ENCODE measurements at regions of chr16 and their contacts with region 1.

Region 1: GRCh38 chr16:67246934-67247697 is at the start of gene FHOD1:
- DNase-seq: peak; percentile 93 to 95 (median 93)
- H3K4me3 ChIP-seq: peak within 1 kb of the TSS; percentile 71 to 97 (median 74)
- H3K4me3 Mint-ChIP-seq: peak within 1 kb of the TSS; percentile 92
- H3K27ac ChIP-seq: peak within 1 kb of the TSS; percentile 84 to 100
- H3K27ac Mint-ChIP-seq: peak within 1 kb of the TSS; percentile 82 to 100 (median 99)
- H3K4me1 ChIP-seq: peaks cover 57 to 64% of the 10 kb centered on the region in 2 donors
- H3K4me1 Mint-ChIP-seq: peaks cover 59% of the 10 kb centered on the region
- H3K27me3 ChIP-seq: peaks cover 24 to 32% of the 10 kb centered on the region in 2 donors
- H3K27me3 Mint-ChIP-seq: peaks cover 22 to 41% (median 30%) of the 10 kb centered on the region in 3 donors
- CTCF ChIP-seq: no peak
- polyA plus RNA-seq, gene FHOD1: 5.1 to 152 (median 5.5) TPM

Region 2: GRCh38 chr16:66696669-66697630 is 550.2 kb before region 1 on chr16 and contains the start of gene CMTM4:
- intact Hi-C with region 1: loop called in 1 of 2 experiments (anchors 10 kb)
- DNase-seq: peak; percentile 67 to 82 (median 70)
- H3K4me3 ChIP-seq: peak within 1 kb of the TSS; percentile 66 to 92 (median 86)
- H3K4me3 Mint-ChIP-seq: peak within 1 kb of the TSS; percentile 91 to 93
- H3K27ac ChIP-seq: peak within 1 kb of the TSS; percentile 21 to 58
- H3K27ac Mint-ChIP-seq: peak within 1 kb of the TSS; percentile 59 to 88 (median 80)
- H3K4me1 ChIP-seq: peaks cover 74 to 81% of the 10 kb centered on the region in 2 donors
- H3K4me1 Mint-ChIP-seq: peaks cover 74% of the 10 kb centered on the region
- H3K27me3 ChIP-seq: no peaks in the 10 kb centered on the region
- H3K27me3 Mint-ChIP-seq: peaks cover 0 to 2% (median 0%) of the 10 kb centered on the region in 3 donors
- CTCF ChIP-seq: no peak
- polyA plus RNA-seq, gene CMTM4: 0.41 to 21.2 (median 0.45) TPM

Region 3: DNA sequence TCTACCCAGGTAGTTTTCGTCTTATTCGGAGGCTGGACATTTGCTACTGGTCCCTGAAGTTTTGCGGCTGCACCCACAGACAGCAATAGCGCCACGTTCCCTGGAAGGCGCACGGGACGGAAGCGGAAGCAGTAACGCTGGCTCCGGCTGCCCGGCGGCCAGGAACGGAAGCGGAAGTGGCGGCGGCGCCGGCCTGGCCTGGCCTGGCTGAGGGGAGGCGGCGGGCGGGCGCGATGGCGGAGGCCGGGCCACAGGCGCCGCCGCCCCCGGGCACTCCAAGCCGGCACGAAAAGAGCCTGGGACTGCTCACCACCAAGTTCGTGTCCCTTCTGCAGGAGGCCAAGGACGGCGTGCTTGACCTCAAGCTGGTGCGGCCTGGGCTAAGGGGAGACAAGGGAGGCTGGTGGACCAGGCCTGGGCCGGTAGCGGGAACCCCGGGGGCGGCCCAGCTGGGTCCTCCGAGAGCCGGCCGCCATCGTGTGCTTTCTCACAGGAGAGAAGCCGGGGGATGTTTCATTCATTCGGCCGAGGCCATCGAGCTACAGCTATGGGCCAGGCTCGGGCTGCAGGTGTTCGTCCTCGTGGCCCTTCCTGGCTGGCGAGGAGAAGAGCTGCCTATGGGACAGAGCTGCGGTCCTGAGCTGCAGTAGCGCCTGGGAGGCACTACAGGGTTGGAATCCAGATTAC is 55.0 kb before region 1 on chr16 and contains the start of gene E2F4:
- intact Hi-C with region 1: loop called (anchors 2 kb)
- DNase-seq: peak; percentile 92 to 94 (median 93)
- H3K4me3 ChIP-seq: peak within 1 kb of the TSS; percentile 81 to 99 (median 95)
- H3K4me3 Mint-ChIP-seq: peak within 1 kb of the TSS; percentile 83 to 88
- H3K27ac ChIP-seq: peak within 1 kb of the TSS; percentile 53 to 87
- H3K27ac Mint-ChIP-seq: peak within 1 kb of the TSS; percentile 79 to 88 (median 83)
- H3K4me1 ChIP-seq: peaks cover 18 to 20% of the 10 kb centered on the region in 2 donors
- H3K4me1 Mint-ChIP-seq: peaks cover 30% of the 10 kb centered on the region
- H3K27me3 ChIP-seq: no peaks in the 10 kb centered on the region
- H3K27me3 Mint-ChIP-seq: peaks cover 0 to under 1% (median 0%) of the 10 kb centered on the region in 3 donors
- CTCF ChIP-seq: no peak
- polyA plus RNA-seq, gene E2F4: 53.1 to 191 (median 61.5) TPM

Region 4: GRCh38 chr16:67226804-67227557 is 20.1 kb before region 1 on chr16 and contains the start of gene TMEM208:
- intact Hi-C with region 1: loop called (anchors 1 to 2 kb)
- DNase-seq: peak; percentile 97 to 99 (median 98)
- H3K4me3 ChIP-seq: peak within 1 kb of the TSS; percentile 74 to 99 (median 92)
- H3K4me3 Mint-ChIP-seq: peak within 1 kb of the TSS; percentile 95 to 96
- H3K27ac ChIP-seq: peak within 1 kb of the TSS; percentile 58 to 92
- H3K27ac Mint-ChIP-seq: peak within 1 kb of the TSS; percentile 90 to 99 (median 96)
- H3K4me1 ChIP-seq: peaks cover 17 to 23% of the 10 kb centered on the region in 2 donors
- H3K4me1 Mint-ChIP-seq: peaks cover 26% of the 10 kb centered on the region
- H3K27me3 ChIP-seq: no peaks in the 10 kb centered on the region
- H3K27me3 Mint-ChIP-seq: peaks cover 0 to 1% (median 0%) of the 10 kb centered on the region in 3 donors
- CTCF ChIP-seq: no peak
- polyA plus RNA-seq, gene TMEM208: 45.4 to 130 (median 117) TPM

Region 5: GRCh38 chr16:67268136-67268579 is 21.0 kb after region 1 on chr16:
- intact Hi-C with region 1: no loop called
- DNase-seq: no peak
- H3K4me3 ChIP-seq: no peak overlapping the region
- H3K4me3 Mint-ChIP-seq: no peak overlapping the region
- H3K27ac ChIP-seq: no peak overlapping the region
- H3K27ac Mint-ChIP-seq: peak overlapping the region in 1 of 7 donors; percentile 45
- H3K4me1 ChIP-seq: no peaks in the 10 kb centered on the region
- H3K4me1 Mint-ChIP-seq: peaks cover 3% of the 10 kb centered on the region
- H3K27me3 ChIP-seq: no peaks in the 10 kb centered on the region
- H3K27me3 Mint-ChIP-seq: peaks cover 2 to 20% (median 10%) of the 10 kb centered on the region in 3 donors
- CTCF ChIP-seq: no peak

Region 6: DNA sequence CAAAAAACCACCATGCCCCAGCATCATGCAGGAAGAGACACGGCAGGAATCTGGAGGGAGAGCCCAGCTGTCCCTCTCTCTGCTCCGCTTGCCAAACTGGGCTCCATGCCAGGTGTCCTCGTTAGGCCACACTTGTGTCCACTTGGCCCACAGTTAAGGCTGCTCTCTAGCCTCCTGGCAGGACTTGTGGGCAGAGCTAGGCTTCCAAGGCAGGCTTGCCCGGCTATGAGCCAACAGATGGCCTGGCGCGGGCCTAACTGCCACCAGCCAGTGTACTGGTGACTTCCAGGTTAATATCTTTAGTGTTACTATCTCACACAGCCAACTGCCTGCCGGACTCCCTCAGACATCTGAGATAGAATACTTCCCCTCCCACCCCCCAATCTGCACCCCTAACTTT is 223.2 kb after region 1 on chr16:
- intact Hi-C with region 1: loop called in 1 of 2 experiments (anchors 10 kb)
- DNase-seq: no peak
- H3K4me3 ChIP-seq: no peak overlapping the region
- H3K4me3 Mint-ChIP-seq: no peak overlapping the region
- H3K27ac ChIP-seq: peak overlapping the region; percentile 2 to 51
- H3K27ac Mint-ChIP-seq: peak overlapping the region in 6 of 7 donors; percentile 6 to 86 (median 40)
- H3K4me1 ChIP-seq: peaks cover 61 to 84% of the 10 kb centered on the region in 2 donors
- H3K4me1 Mint-ChIP-seq: peaks cover 91% of the 10 kb centered on the region
- H3K27me3 ChIP-seq: no peaks in the 10 kb centered on the region
- H3K27me3 Mint-ChIP-seq: no peaks in the 10 kb centered on the region
- CTCF ChIP-seq: no peak